ENCODE measurements at regions of chr9 and their contacts with region 1.

Region 1: GRCh38 chr9:98374385-98375051 is 119.1 kb upstream of the TBC1D2 start:
- DNase-seq: no peak
- H3K4me3 ChIP-seq: no peak overlapping the region
- H3K27ac ChIP-seq: no peak overlapping the region
- H3K4me1 ChIP-seq: peaks cover 14% of the 10 kb centered on the region
- CTCF ChIP-seq: no peak

Region 2: GRCh38 chr9:97958812-97959511 is 415.6 kb before region 1 on chr9:
- CTCF ChIA-PET with region 1: no interaction called
- POLR2A ChIA-PET with region 1: no interaction called
- intact Hi-C with region 1: no loop called
- DNase-seq: no peak
- H3K4me3 ChIP-seq: no peak overlapping the region
- H3K27ac ChIP-seq: no peak overlapping the region
- H3K4me1 ChIP-seq: peaks cover 14% of the 10 kb centered on the region
- CTCF ChIP-seq: no peak

Region 3: DNA sequence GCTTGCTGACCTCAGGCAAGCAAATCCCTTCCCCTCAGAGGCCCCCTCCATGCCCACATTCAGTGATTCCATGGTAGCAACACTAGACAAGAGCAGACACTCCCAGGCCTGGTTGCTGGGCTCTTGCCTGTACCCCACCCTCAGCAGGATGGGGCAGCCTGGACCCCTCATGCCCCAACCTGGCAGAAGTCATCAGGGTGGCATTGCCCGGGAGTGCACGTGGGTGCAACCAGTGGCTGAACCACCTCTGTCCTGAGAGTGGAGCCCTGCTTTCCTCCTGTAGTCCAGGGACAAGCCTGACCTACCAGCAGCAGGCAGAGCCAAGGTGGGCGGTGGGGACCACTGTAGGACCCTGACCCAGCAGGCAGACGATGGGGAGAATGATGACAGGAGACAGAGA is 53.2 kb before region 1 on chr9:
- CTCF ChIA-PET with region 1: no interaction called
- POLR2A ChIA-PET with region 1: no interaction called
- intact Hi-C with region 1: no loop called
- DNase-seq: no peak
- H3K4me3 ChIP-seq: no peak overlapping the region
- H3K27ac ChIP-seq: no peak overlapping the region
- H3K4me1 ChIP-seq: peaks cover 2% of the 10 kb centered on the region
- CTCF ChIP-seq: no peak

Region 4: GRCh38 chr9:98341157-98342097 is 33.1 kb before region 1 on chr9:
- CTCF ChIA-PET with region 1: no interaction called
- POLR2A ChIA-PET with region 1: no interaction called
- intact Hi-C with region 1: no loop called
- DNase-seq: no peak
- H3K4me3 ChIP-seq: no peak overlapping the region
- H3K27ac ChIP-seq: no peak overlapping the region
- H3K4me1 ChIP-seq: no peaks in the 10 kb centered on the region
- CTCF ChIP-seq: no peak

Region 5: GRCh38 chr9:98781588-98782383 is 407.3 kb after region 1 on chr9:
- CTCF ChIA-PET with region 1: no interaction called
- POLR2A ChIA-PET with region 1: no interaction called
- intact Hi-C with region 1: loop called (anchors 10 kb)
- DNase-seq: no peak
- H3K4me3 ChIP-seq: no peak overlapping the region
- H3K27ac ChIP-seq: no peak overlapping the region
- H3K4me1 ChIP-seq: no peaks in the 10 kb centered on the region
- CTCF ChIP-seq: no peak

Measured in OCI-LY7 (cell line).